ENCODE measurements at regions of chr16 and their contacts with region 1.

Region 1: GRCh38 chr16:3023669-3024478 is at the starts of genes HCFC1R1 and THOC6:
- DNase-seq: peak; percentile 98
- ATAC-seq: peak; percentile 47
- H3K4me3 Mint-ChIP-seq: peak within 1 kb of the TSS; percentile 86
- H3K27ac Mint-ChIP-seq: peak within 1 kb of the TSS; percentile 99
- H3K4me1 Mint-ChIP-seq: peaks cover 37% of the 10 kb centered on the region
- H3K27me3 Mint-ChIP-seq: peaks cover 2% of the 10 kb centered on the region; the same call in 1 of the 2 replicates
- CTCF ChIP-seq: no peak
- total RNA-seq, gene HCFC1R1: 76.0 to 84.0 TPM (median 83.2 TPM) in 3 replicates
- total RNA-seq, gene THOC6: 76.5 to 94.2 TPM (median 88.7 TPM) in 3 replicates

Region 2: GRCh38 chr16:2673066-2673999 is 350.5 kb before region 1 on chr16:
- CTCF ChIA-PET with region 1: no interaction called
- POLR2A ChIA-PET with region 1: no interaction called
- DNase-seq: peak; percentile 96
- ATAC-seq: peak; percentile 98
- H3K4me3 Mint-ChIP-seq: peak overlapping the region; percentile 65
- H3K27ac Mint-ChIP-seq: no peak overlapping the region; the same call in 1 of the 2 replicates
- H3K4me1 Mint-ChIP-seq: peaks cover 6% of the 10 kb centered on the region
- H3K27me3 Mint-ChIP-seq: no peaks in the 10 kb centered on the region
- CTCF ChIP-seq: no peak

Region 3: GRCh38 chr16:2715946-2716885 is 307.7 kb before region 1 on chr16:
- CTCF ChIA-PET with region 1: no interaction called
- POLR2A ChIA-PET with region 1: no interaction called
- DNase-seq: no peak
- ATAC-seq: no peak
- H3K4me3 Mint-ChIP-seq: peak overlapping the region; percentile 35; the same call in 1 of the 2 replicates
- H3K27ac Mint-ChIP-seq: no peak overlapping the region
- H3K4me1 Mint-ChIP-seq: peaks cover 6% of the 10 kb centered on the region; the same call in 1 of the 2 replicates
- H3K27me3 Mint-ChIP-seq: no peaks in the 10 kb centered on the region
- CTCF ChIP-seq: no peak

Region 4: GRCh38 chr16:2968738-2969544 is 54.9 kb before region 1 on chr16 and contains the start of gene PAQR4:
- CTCF ChIA-PET with region 1: interaction called, 28 read pairs
- POLR2A ChIA-PET with region 1: interaction called, 11 read pairs
- DNase-seq: peak; percentile 89
- ATAC-seq: peak; percentile 62
- H3K4me3 Mint-ChIP-seq: peak within 1 kb of the TSS; percentile 66
- H3K27ac Mint-ChIP-seq: no peak within 1 kb of the TSS
- H3K4me1 Mint-ChIP-seq: peaks cover 27% of the 10 kb centered on the region
- H3K27me3 Mint-ChIP-seq: peaks cover 33% of the 10 kb centered on the region
- CTCF ChIP-seq: no peak
- total RNA-seq, gene PAQR4: 21.1 to 32.4 TPM (median 21.5 TPM) in 3 replicates

Region 5: DNA sequence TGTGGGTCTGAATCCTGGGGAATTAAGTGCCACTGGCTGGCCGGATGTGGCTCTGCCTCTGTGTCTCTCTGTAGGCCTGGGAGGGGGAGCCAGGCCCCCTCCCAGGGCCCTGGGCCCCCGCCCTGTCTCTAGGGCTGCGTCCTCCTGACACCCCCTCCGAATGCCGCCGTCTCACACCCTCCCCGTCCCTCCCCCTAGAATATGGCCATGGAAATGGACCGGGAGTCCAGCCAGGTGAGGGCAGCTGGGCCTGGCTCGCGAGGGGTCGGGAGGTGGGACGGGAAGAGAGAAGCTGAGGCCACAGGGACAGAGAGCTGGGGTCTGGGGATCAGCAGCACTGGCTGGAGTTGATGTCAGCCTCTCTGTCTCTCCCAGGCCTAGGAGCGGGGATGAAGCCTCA is 27.6 kb before region 1 on chr16:
- CTCF ChIA-PET with region 1: interaction called, 355 read pairs
- POLR2A ChIA-PET with region 1: interaction called, 502 read pairs
- DNase-seq: no peak
- ATAC-seq: no peak
- H3K4me3 Mint-ChIP-seq: no peak overlapping the region
- H3K27ac Mint-ChIP-seq: no peak overlapping the region
- H3K4me1 Mint-ChIP-seq: no peaks in the 10 kb centered on the region; the same call in 1 of the 2 replicates
- H3K27me3 Mint-ChIP-seq: no peaks in the 10 kb centered on the region
- CTCF ChIP-seq: no peak

Region 6: GRCh38 chr16:3038256-3038655 is 14.4 kb after region 1 on chr16:
- CTCF ChIA-PET with region 1: interaction called, 292 read pairs
- POLR2A ChIA-PET with region 1: interaction called, 6 read pairs
- DNase-seq: peak; percentile 71
- ATAC-seq: peak; percentile 31
- H3K4me3 Mint-ChIP-seq: no peak overlapping the region
- H3K27ac Mint-ChIP-seq: 0 out of 2 replicates have a peak overlapping the region, but pooled peaks have one; percentile 53
- H3K4me1 Mint-ChIP-seq: peaks cover 23% of the 10 kb centered on the region
- H3K27me3 Mint-ChIP-seq: peaks cover 3% of the 10 kb centered on the region; the same call in 1 of the 2 replicates
- CTCF ChIP-seq: no peak

Region 7: DNA sequence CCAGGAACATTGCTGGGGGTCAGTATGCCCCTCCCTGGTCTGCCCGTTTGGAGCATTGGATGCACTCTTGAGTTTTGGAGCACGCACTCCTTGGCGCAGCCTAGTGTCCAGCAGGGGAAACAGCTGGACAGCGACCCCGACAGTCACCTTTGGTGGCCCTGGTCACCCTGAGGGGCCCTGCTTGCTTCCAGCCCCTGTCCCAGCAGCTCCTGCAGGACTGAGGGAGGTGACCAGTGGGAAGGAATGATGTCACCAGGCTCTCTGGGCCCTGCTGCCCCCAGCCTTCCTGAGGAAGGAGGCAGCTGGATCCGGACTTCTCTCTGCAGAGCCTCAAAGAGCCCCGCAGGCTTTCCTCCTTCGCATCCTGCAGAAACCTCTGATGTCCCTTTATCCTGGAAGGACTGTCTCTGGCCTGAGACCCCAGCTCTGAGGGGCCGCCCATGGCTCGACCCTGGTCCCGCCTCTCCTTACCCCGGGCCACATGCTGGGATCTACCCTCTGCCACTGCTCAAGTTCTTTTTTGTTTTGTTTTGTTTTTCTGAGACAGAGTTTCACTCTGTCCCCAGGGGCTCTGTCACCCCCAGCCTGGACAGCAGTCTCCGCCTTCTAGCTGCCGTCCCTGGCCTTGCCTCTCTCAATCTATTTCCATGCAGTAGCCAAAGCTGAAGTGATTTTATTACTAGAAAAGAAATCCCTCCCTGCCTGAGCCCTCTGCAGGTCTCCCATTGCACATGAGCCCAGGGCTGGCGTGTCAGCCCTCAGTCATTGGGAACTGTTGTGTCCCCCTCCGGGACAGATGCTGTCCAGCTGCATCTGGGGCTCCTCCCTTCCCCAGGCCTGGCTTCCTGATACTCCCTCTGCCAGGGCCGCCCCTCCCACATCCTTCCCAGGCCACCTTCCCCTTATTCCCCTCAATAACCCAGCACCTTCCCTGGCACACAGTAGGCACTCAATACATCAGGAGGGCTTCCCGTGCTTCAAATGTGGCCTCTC is 63.7 kb after region 1 on chr16:
- CTCF ChIA-PET with region 1: interaction called, 11 read pairs
- POLR2A ChIA-PET with region 1: interaction called, 4 read pairs
- DNase-seq: peak; percentile 50
- ATAC-seq: peak; percentile 49
- H3K4me3 Mint-ChIP-seq: no peak overlapping the region
- H3K27ac Mint-ChIP-seq: peak overlapping the region; percentile 84
- H3K4me1 Mint-ChIP-seq: peaks cover 21% of the 10 kb centered on the region
- H3K27me3 Mint-ChIP-seq: no peaks in the 10 kb centered on the region
- CTCF ChIP-seq: no peak

Region 8: DNA sequence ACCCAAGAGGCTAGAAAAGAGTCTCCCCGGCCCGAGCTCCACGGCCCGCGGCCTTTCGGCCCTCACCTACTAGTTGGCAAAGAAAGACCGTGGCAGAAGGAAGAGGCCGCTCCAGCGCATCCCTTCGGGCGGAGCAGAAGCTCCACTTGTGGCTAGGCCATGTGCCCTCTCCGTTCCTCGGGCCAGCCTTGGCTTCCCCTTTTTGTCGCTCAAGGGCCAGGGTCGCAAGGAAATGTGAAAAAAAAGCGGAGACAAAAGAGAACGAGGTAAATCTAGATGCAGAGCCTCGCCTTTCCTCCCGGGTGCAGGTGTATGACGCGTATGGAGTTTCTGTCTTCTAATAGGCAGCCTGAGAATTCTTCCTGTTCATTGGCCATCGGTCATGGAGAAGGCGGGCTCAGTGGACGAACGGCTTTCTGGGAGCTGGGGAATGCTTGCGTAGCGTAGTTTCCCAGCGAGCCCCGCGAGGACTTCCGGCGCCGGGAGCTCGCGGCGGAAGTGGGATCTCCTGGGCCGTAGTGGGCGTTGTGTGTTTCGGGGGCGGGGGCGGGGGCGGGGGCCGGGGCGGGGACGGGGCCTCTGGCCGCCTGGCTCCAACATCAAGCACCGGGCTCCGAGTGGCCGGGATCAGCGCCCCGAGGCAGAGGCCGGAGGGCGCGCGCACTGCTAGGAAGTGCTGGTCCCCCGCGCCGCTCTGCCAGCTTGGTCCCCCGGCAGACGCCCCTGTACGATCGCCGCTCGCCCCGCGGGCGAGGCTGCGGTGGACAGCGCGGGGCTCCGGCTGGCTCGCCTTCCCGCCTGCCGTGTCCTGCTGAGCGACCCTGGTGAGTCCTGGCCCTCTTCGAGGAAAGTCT is 110.9 kb after region 1 on chr16 and contains the start of gene ZNF213:
- CTCF ChIA-PET with region 1: interaction called, 19 read pairs
- POLR2A ChIA-PET with region 1: interaction called, 5 read pairs
- DNase-seq: peak; percentile 94
- ATAC-seq: peak; percentile 94
- H3K4me3 Mint-ChIP-seq: peak within 1 kb of the TSS; percentile 98
- H3K27ac Mint-ChIP-seq: peak within 1 kb of the TSS; percentile 99
- H3K4me1 Mint-ChIP-seq: peaks cover 17% of the 10 kb centered on the region
- H3K27me3 Mint-ChIP-seq: no peaks in the 10 kb centered on the region
- CTCF ChIP-seq: no peak
- total RNA-seq, gene ZNF213: 8.9 to 11.6 TPM (median 10.3 TPM) in 3 replicates